Sciatic nerve (tissue), 2 donors: ENCODE measurements at regions of chr2 and their contacts with region 1.

Region 1: GRCh38 chr2:171800639-171801038 is 93.4 kb downstream of the SLC25A12 start:
- DNase-seq: no peak
- ATAC-seq: no peak

Region 2: GRCh38 chr2:172472446-172473033 is 671.9 kb after region 1 on chr2:
- intact Hi-C with region 1: loop called (anchors 5 kb)
- DNase-seq: no peak
- ATAC-seq: no peak